ENCODE measurements at regions of chr16 and their contacts with region 1.

Region 1: DNA sequence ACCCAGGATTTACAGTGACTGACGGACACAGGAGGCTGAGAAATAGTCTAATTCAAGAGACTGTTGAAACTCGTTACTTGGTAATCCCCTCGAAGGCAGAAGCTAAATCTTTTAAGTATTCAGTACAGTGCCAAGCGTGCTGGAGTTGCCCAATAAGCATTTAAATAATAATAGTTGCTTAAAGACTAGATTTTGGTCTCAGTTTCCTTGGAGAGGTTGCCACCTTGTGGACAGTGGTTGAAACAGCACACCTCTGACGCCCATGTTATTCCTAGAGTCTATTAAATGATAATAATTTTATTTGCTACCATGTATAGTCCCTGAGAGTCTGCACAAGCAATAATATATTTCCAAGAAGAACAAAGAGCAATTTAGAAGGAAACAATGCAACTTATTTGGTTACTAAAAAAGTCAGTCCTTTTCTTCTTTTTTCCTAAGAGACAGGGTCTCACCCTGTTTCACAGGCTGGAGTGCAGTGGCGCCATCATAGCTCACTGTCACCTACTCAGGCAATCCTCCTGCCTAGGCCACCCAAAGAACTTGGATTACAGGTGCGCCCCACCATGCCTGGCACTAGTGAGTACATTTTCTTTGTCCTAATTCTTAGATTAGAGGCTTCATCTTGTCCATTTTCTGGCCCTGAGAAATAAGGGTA is 138.0 kb upstream of the NUDT7 start:
- DNase-seq: no peak
- H3K4me3 ChIP-seq: no peak overlapping the region
- H3K27ac ChIP-seq: no peak overlapping the region
- H3K4me1 ChIP-seq: no peaks in the 10 kb centered on the region
- H3K27me3 ChIP-seq: no peaks in the 10 kb centered on the region
- CTCF ChIP-seq: peak; percentile 75 to 91 (median 85)
- EP300 ChIP-seq: no peak
- POLR2A ChIP-seq: no peak

Region 2: GRCh38 chr16:77308163-77308561 is 276.2 kb before region 1 on chr16:
- intact Hi-C with region 1: no loop called
- DNase-seq: no peak
- H3K4me3 ChIP-seq: no peak overlapping the region
- H3K27ac ChIP-seq: no peak overlapping the region
- H3K4me1 ChIP-seq: no peaks in the 10 kb centered on the region
- H3K27me3 ChIP-seq: no peaks in the 10 kb centered on the region
- CTCF ChIP-seq: no peak
- EP300 ChIP-seq: no peak
- POLR2A ChIP-seq: no peak

Region 3: GRCh38 chr16:77437859-77438258 is 146.5 kb before region 1 on chr16:
- intact Hi-C with region 1: loop called (anchors 5 kb)
- DNase-seq: no peak
- H3K4me3 ChIP-seq: no peak overlapping the region
- H3K27ac ChIP-seq: no peak overlapping the region
- H3K4me1 ChIP-seq: peaks cover 0 to 19% (median 9%) of the 10 kb centered on the region in 4 donors
- H3K27me3 ChIP-seq: peaks cover 14 to 39% (median 26%) of the 10 kb centered on the region in 3 donors
- CTCF ChIP-seq: no peak
- EP300 ChIP-seq: no peak
- POLR2A ChIP-seq: no peak

Region 4: DNA sequence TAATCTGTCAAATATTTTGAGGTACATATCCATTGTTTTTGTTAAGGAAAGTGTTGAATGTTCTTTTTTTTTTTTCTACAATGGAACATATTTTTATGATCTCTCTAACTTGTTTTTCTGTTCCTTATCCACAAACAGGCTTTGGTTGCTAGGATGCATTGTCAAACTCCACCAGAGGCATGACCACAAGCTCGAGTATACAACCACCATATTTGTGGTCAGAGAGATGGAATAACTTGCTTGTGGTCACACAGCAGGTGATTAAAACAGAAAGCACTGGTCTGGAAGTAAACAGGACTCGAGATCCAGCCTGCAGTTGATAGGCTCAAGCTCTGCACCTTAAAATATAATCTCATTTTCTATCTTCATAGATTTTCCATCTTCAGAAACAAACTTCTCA is 43.7 kb before region 1 on chr16:
- intact Hi-C with region 1: no loop called
- DNase-seq: no peak
- H3K4me3 ChIP-seq: no peak overlapping the region
- H3K27ac ChIP-seq: no peak overlapping the region
- H3K4me1 ChIP-seq: peaks cover 0 to 15% (median 3%) of the 10 kb centered on the region in 4 donors
- H3K27me3 ChIP-seq: no peaks in the 10 kb centered on the region
- CTCF ChIP-seq: no peak
- EP300 ChIP-seq: no peak
- POLR2A ChIP-seq: no peak

Region 5: GRCh38 chr16:77675464-77676324 is 91.4 kb after region 1 on chr16:
- intact Hi-C with region 1: no loop called
- DNase-seq: peak; percentile 78
- H3K4me3 ChIP-seq: no peak overlapping the region
- H3K27ac ChIP-seq: no peak overlapping the region
- H3K4me1 ChIP-seq: no peaks in the 10 kb centered on the region
- H3K27me3 ChIP-seq: no peaks in the 10 kb centered on the region
- CTCF ChIP-seq: peak; percentile 72 to 97 (median 89)
- EP300 ChIP-seq: no peak
- POLR2A ChIP-seq: no peak

Region 6: GRCh38 chr16:77744141-77744540 is 159.8 kb after region 1 on chr16:
- intact Hi-C with region 1: no loop called
- DNase-seq: no peak
- H3K4me3 ChIP-seq: no peak overlapping the region
- H3K27ac ChIP-seq: no peak overlapping the region
- H3K4me1 ChIP-seq: no peaks in the 10 kb centered on the region
- H3K27me3 ChIP-seq: no peaks in the 10 kb centered on the region
- CTCF ChIP-seq: no peak
- EP300 ChIP-seq: no peak
- POLR2A ChIP-seq: no peak